ENCODE measurements at regions of chr1 and their contacts with region 1.

Region 1: DNA sequence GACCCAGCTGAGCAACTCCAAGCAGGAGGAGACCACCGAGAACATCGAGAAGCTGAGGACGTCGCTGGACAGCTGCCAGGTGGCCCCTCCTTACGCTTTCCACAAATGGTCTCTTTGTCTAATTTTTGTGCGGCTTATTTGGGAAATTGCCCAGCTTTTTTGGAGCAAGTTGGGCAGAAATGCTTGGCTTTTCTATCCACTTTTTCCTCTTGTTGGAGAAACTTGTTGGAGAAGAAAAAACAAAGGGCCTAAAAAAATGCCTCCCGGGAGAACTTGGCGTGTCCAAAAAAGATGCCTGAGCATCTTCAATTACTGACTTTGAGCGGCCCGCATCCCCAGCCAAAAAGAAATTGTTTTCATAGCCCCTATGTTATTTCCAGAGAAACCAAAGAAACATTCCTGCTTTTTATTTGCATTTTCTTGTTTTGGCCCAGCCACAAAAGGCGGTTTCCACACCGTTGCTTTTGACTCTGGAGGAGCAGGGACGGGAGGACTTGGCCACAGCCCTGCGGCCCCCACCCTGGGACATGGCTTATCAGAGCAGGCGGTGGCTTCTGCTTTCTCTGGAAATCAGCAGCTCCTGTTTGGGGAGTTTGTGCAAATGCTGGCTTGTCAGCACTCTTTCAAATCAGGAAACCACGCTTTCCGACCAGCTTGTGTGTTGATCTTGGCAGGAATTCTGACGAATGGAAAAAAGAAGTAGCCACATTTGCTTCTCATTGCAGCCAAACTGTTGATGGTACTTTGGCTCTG is 81.2 kb upstream of the EFHD2 start:
- DNase-seq: peak in 6 of 7 donors; percentile 53 to 78 (median 64)
- H3K4me3 ChIP-seq: no peak overlapping the region
- H3K27ac ChIP-seq: peak overlapping the region in 3 of 5 donors; percentile 18 to 67 (median 53)
- H3K4me1 ChIP-seq: peaks cover 15 to 34% of the 10 kb centered on the region in 2 donors
- H3K27me3 ChIP-seq: no peaks in the 10 kb centered on the region
- CTCF ChIP-seq: no peak
- POLR2A ChIP-seq: no peak

Region 2: GRCh38 chr1:15430787-15431570 is 102.5 kb after region 1 on chr1:
- intact Hi-C with region 1: loop called (anchors 2 to 5 kb)
- DNase-seq: peak; percentile 73 to 90 (median 82)
- H3K4me3 ChIP-seq: no peak overlapping the region
- H3K27ac ChIP-seq: peak overlapping the region; percentile 22 to 92 (median 79)
- H3K4me1 ChIP-seq: peaks cover 7 to 22% of the 10 kb centered on the region in 2 donors
- H3K27me3 ChIP-seq: no peaks in the 10 kb centered on the region
- CTCF ChIP-seq: peak; percentile 94 to 99 (median 97)
- POLR2A ChIP-seq: no peak